Sigmoid colon (tissue), 7 donors: ENCODE measurements at regions of chr14 and their contacts with region 1.

Region 1: DNA sequence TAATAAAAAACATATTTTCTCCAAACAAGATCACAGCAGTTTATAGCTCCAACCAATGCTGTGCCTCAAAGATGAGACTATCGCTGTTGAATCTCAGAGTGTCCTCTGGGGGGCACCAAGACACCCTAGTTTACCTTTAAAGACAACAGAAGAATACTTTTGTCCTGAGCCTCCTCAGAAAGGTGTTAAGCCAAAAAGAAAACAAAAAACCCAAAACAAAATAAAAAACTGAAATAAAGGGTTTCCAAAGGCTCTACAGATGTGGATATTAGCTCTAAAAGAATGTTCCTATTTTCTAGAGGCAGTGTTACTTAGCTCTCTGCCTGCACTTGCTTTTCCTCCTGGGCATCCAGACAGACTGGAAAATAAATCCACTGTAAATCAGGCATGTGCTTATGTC is 86.9 kb upstream of the TTC7B start:
- DNase-seq: peak; percentile 74
- H3K4me3 ChIP-seq: no peak overlapping the region
- H3K27ac ChIP-seq: no peak overlapping the region
- H3K4me1 ChIP-seq: peaks cover 0 to 7% (median 4%) of the 10 kb centered on the region in 4 donors
- H3K27me3 ChIP-seq: no peaks in the 10 kb centered on the region
- CTCF ChIP-seq: peak; percentile 66 to 84 (median 72)
- EP300 ChIP-seq: no peak
- POLR2A ChIP-seq: no peak

Region 2: GRCh38 chr14:91177073-91178034 is 274.3 kb after region 1 on chr14:
- intact Hi-C with region 1: loop called (anchors 1 kb)
- DNase-seq: no peak
- H3K4me3 ChIP-seq: no peak overlapping the region
- H3K27ac ChIP-seq: no peak overlapping the region
- H3K4me1 ChIP-seq: peaks cover 0 to 17% (median 3%) of the 10 kb centered on the region in 4 donors
- H3K27me3 ChIP-seq: no peaks in the 10 kb centered on the region
- CTCF ChIP-seq: peak; percentile 41 to 74 (median 65)
- EP300 ChIP-seq: no peak
- POLR2A ChIP-seq: no peak

Region 3: GRCh38 chr14:91286530-91286937 is 383.4 kb after region 1 on chr14:
- intact Hi-C with region 1: loop called (anchors 5 kb)
- DNase-seq: peak; percentile 83
- H3K4me3 ChIP-seq: no peak overlapping the region
- H3K27ac ChIP-seq: no peak overlapping the region
- H3K4me1 ChIP-seq: peaks cover 0 to 31% (median 26%) of the 10 kb centered on the region in 4 donors
- H3K27me3 ChIP-seq: no peaks in the 10 kb centered on the region
- CTCF ChIP-seq: peak; percentile 81 to 95 (median 90)
- EP300 ChIP-seq: no peak
- POLR2A ChIP-seq: no peak